ENCODE measurements at regions of chr7 and their contacts with region 1.

Region 1: DNA sequence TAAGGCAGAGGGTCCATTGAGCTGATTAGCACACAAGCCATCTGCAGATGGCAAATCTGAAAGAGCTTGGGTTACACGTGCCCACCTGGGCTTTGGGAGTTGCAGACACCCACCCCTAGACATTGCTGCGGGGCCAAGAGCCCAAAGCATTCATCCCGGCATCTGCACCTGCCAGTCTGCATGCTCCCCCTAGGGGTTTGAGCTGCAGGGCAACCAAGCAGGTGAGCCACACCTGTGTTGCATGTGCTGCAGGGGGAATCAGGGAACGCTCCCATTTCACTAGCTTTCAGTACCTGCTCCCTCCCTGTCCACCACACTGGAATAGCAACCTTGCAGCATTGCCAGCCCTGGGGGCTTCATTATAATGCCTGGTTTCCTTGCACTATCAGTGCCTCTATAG is 21.1 kb downstream of the C7orf33 start:
- DNase-seq: peak; percentile 33 to 66
- H3K4me3 ChIP-seq: no peak overlapping the region
- H3K27ac ChIP-seq: no peak overlapping the region
- H3K4me1 ChIP-seq: peaks cover 1 to 7% (median 4%) of the 10 kb centered on the region in 4 experiments; a peak in 4 of 7 replicates
- H3K27me3 ChIP-seq: no peaks in the 10 kb centered on the region
- CTCF ChIP-seq: peak; percentile 61 to 79 (median 78)
- EP300 ChIP-seq: no peak
- POLR2A ChIP-seq: no peak
- RAD21 ChIP-seq: peak; percentile 59 to 73

Region 2: GRCh38 chr7:147721962-147722830 is 889.5 kb before region 1 on chr7:
- CTCF ChIA-PET with region 1: no interaction called
- POLR2A ChIA-PET with region 1: no interaction called
- DNase-seq: no peak
- H3K4me3 ChIP-seq: no peak overlapping the region
- H3K27ac ChIP-seq: no peak overlapping the region
- H3K4me1 ChIP-seq: no peaks in the 10 kb centered on the region
- H3K27me3 ChIP-seq: no peaks in the 10 kb centered on the region
- CTCF ChIP-seq: no peak
- EP300 ChIP-seq: no peak
- POLR2A ChIP-seq: no peak
- RAD21 ChIP-seq: no peak

Region 3: GRCh38 chr7:148447221-148447849 is 164.4 kb before region 1 on chr7:
- CTCF ChIA-PET with region 1: no interaction called
- POLR2A ChIA-PET with region 1: no interaction called
- DNase-seq: no peak
- H3K4me3 ChIP-seq: no peak overlapping the region
- H3K27ac ChIP-seq: no peak overlapping the region
- H3K4me1 ChIP-seq: no peaks in the 10 kb centered on the region
- H3K27me3 ChIP-seq: no peaks in the 10 kb centered on the region
- CTCF ChIP-seq: no peak
- EP300 ChIP-seq: no peak
- POLR2A ChIP-seq: no peak
- RAD21 ChIP-seq: no peak

Region 4: GRCh38 chr7:148575640-148576411 is 35.9 kb before region 1 on chr7:
- CTCF ChIA-PET with region 1: interaction called, 19 read pairs
- POLR2A ChIA-PET with region 1: interaction called, 3 read pairs
- DNase-seq: peak in 1 of 2 experiments; percentile 89
- H3K4me3 ChIP-seq: no peak overlapping the region
- H3K27ac ChIP-seq: no peak overlapping the region
- H3K4me1 ChIP-seq: no peaks in the 10 kb centered on the region
- H3K27me3 ChIP-seq: no peaks in the 10 kb centered on the region
- CTCF ChIP-seq: peak; percentile 76 to 88 (median 88)
- EP300 ChIP-seq: no peak
- POLR2A ChIP-seq: no peak
- RAD21 ChIP-seq: peak; percentile 86 to 91

Measured in H1 (cell line).